PC-3 (cell line): ENCODE measurements at regions of chrX and their contacts with region 1.

Region 1: GRCh38 chrX:136047969-136048368 is 62.7 kb downstream of the SLC9A6 start:
- DNase-seq: peak; percentile 37
- ATAC-seq: no peak
- H3K4me3 ChIP-seq: peak overlapping the region; percentile 35; the same call in 1 of the 2 replicates
- H3K27ac ChIP-seq: peak overlapping the region; percentile 100
- H3K4me1 ChIP-seq: peaks cover 36% of the 10 kb centered on the region
- H3K27me3 ChIP-seq: no peaks in the 10 kb centered on the region
- CTCF ChIP-seq: no peak

Region 2: DNA sequence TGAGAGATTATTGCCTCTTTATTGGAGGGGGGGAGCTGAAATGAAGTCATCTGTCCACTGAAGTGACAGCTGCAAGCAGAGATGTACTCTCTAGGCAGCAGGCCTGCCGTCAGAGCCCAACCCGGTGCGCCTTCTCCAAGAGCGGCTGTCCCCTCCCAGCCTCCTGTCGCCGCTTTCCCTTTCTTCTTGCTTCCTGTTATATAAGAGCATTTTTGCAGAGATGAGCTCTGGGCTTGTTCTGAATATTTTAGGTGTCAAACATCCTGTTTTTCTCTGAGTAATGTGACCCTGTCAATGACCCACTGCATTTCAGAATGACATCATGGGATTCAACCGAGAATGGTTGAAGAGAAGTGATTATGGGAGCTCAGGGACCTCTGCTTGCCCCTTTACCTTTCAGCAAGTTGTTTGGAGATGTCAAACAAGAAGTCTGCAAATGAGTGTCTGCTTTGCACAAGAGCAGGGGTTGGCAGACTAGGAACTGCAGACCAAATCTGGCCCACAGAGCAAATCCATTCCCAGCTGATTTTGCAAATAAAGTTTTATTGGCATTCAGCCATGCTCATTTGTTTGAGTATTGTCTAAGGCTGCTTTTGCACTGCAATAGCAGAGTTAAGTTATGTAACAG is 17.2 kb after region 1 on chrX:
- CTCF ChIA-PET with region 1: no interaction called
- POLR2A ChIA-PET with region 1: no interaction called
- intact Hi-C with region 1: loop called (anchors 1 kb)
- DNase-seq: peak; percentile 88
- ATAC-seq: peak; percentile 88
- H3K4me3 ChIP-seq: peak overlapping the region; percentile 24; the same call in 1 of the 2 replicates
- H3K27ac ChIP-seq: peak overlapping the region; percentile 84
- H3K4me1 ChIP-seq: peaks cover 32% of the 10 kb centered on the region
- H3K27me3 ChIP-seq: no peaks in the 10 kb centered on the region
- CTCF ChIP-seq: no peak

Region 3: GRCh38 chrX:136121788-136122187 is 73.8 kb after region 1 on chrX:
- CTCF ChIA-PET with region 1: no interaction called
- POLR2A ChIA-PET with region 1: no interaction called
- intact Hi-C with region 1: loop called (anchors 2 kb)
- DNase-seq: peak; percentile 41
- ATAC-seq: peak; percentile 92
- H3K4me3 ChIP-seq: no peak overlapping the region
- H3K27ac ChIP-seq: no peak overlapping the region
- H3K4me1 ChIP-seq: peaks cover 10% of the 10 kb centered on the region
- H3K27me3 ChIP-seq: no peaks in the 10 kb centered on the region
- CTCF ChIP-seq: no peak

Region 4: DNA sequence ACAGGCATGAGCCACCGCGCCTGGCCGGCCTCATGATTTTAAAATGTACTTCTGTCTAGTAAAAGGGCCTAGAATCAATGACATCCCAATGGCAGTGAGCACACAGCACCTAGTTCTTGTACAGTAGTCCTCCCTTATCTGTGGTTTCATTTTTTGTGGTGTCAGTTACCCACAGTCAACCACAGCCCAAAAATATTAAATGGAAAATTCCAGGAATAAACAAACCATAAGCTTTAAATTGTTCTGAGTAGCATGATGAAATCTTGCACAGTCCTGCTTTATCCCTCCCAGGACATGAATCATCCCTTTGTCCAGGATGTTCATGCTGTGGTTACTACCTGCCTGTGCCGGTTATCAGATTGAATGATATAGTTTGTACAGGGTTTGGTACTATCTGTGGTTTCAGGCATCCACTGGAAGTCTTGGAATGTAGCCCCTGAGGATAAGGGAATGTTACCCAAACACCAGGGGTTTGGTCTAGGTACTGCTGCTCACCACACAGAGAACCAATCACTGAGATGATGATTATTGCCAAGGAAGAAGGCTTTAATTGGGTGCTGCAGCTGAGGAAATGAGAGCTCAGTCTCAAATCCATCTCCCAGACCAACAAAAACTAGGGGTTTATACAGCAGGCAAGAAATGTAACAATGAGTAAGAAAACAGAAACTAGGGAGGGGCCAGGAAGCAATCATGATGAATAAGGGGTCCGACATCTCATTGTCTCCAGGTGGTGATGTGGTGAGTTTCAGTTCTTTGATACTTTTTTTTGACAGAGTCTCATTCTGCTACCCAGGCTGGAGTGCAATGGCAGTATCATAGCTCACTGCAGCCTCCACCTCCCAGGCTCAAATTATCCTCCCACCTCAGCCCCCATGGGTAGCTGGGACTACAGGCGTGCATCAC is 83.2 kb after region 1 on chrX:
- CTCF ChIA-PET with region 1: no interaction called
- POLR2A ChIA-PET with region 1: no interaction called
- intact Hi-C with region 1: loop called (anchors 1 kb)
- DNase-seq: peak; percentile 94
- ATAC-seq: peak; percentile 92
- H3K4me3 ChIP-seq: no peak overlapping the region
- H3K27ac ChIP-seq: peak overlapping the region; percentile 94
- H3K4me1 ChIP-seq: peaks cover 13% of the 10 kb centered on the region; the same call in 1 of the 2 replicates
- H3K27me3 ChIP-seq: no peaks in the 10 kb centered on the region
- CTCF ChIP-seq: no peak